ENCODE measurements at regions of chr3 and their contacts with region 1.

Region 1: GRCh38 chr3:107676469-107677309 is 153.9 kb downstream of the BBX start:
- DNase-seq: peak in 4 of 9 donors; percentile 10 to 52 (median 44)
- ATAC-seq: peak; percentile 49
- H3K4me3 ChIP-seq: no peak overlapping the region
- H3K4me3 Mint-ChIP-seq: no peak overlapping the region
- H3K27ac ChIP-seq: no peak overlapping the region
- H3K27ac Mint-ChIP-seq: peak overlapping the region in 4 of 9 donors; percentile 19 to 79 (median 53)
- H3K4me1 ChIP-seq: no peaks in the 10 kb centered on the region
- H3K4me1 Mint-ChIP-seq: peaks cover 21 to 56% (median 48%) of the 10 kb centered on the region in 7 donors
- H3K27me3 ChIP-seq: no peaks in the 10 kb centered on the region
- H3K27me3 Mint-ChIP-seq: peaks cover 0 to 2% (median 0%) of the 10 kb centered on the region in 5 donors

Region 2: DNA sequence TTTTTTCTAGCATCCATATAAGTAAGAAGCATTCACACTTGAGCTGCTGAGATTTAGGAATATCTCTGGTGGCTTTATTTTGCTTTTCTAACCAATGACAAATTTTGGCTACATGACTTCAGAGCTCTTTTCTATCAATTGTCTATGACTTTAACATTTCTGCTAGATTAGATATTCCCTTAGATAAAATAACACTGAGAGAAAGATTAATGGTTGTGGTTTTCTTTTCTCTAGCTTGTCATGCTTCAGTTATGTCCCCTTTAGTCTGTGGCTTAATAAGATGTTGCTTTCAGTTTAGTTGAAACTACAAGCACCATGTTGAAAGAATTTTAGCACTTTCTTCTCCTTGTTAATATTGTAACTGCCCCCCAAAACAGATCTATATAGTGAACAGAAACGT is 965.0 kb before region 1 on chr3:
- CTCF ChIA-PET with region 1: no interaction called
- POLR2A ChIA-PET with region 1: no interaction called
- intact Hi-C with region 1: no loop called
- DNase-seq: no peak
- ATAC-seq: no peak
- H3K4me3 ChIP-seq: no peak overlapping the region
- H3K4me3 Mint-ChIP-seq: no peak overlapping the region
- H3K27ac ChIP-seq: no peak overlapping the region
- H3K27ac Mint-ChIP-seq: no peak overlapping the region
- H3K4me1 ChIP-seq: no peaks in the 10 kb centered on the region
- H3K4me1 Mint-ChIP-seq: no peaks in the 10 kb centered on the region
- H3K27me3 ChIP-seq: no peaks in the 10 kb centered on the region
- H3K27me3 Mint-ChIP-seq: peaks cover 0 to 13% (median 4%) of the 10 kb centered on the region in 5 donors

Region 3: GRCh38 chr3:107690522-107691138 is 13.9 kb after region 1 on chr3:
- CTCF ChIA-PET with region 1: interaction called, 39 read pairs
- POLR2A ChIA-PET with region 1: interaction called, 3 read pairs
- intact Hi-C with region 1: loop called in 1 of 2 experiments (anchors 2 kb)
- DNase-seq: peak in 7 of 9 donors; percentile 4 to 36 (median 32)
- ATAC-seq: peak; percentile 77
- H3K4me3 ChIP-seq: no peak overlapping the region
- H3K4me3 Mint-ChIP-seq: no peak overlapping the region
- H3K27ac ChIP-seq: no peak overlapping the region
- H3K27ac Mint-ChIP-seq: no peak overlapping the region
- H3K4me1 ChIP-seq: peaks cover 0 to 1% of the 10 kb centered on the region in 2 donors
- H3K4me1 Mint-ChIP-seq: peaks cover 2 to 42% (median 25%) of the 10 kb centered on the region in 7 donors
- H3K27me3 ChIP-seq: no peaks in the 10 kb centered on the region
- H3K27me3 Mint-ChIP-seq: no peaks in the 10 kb centered on the region

Region 4: DNA sequence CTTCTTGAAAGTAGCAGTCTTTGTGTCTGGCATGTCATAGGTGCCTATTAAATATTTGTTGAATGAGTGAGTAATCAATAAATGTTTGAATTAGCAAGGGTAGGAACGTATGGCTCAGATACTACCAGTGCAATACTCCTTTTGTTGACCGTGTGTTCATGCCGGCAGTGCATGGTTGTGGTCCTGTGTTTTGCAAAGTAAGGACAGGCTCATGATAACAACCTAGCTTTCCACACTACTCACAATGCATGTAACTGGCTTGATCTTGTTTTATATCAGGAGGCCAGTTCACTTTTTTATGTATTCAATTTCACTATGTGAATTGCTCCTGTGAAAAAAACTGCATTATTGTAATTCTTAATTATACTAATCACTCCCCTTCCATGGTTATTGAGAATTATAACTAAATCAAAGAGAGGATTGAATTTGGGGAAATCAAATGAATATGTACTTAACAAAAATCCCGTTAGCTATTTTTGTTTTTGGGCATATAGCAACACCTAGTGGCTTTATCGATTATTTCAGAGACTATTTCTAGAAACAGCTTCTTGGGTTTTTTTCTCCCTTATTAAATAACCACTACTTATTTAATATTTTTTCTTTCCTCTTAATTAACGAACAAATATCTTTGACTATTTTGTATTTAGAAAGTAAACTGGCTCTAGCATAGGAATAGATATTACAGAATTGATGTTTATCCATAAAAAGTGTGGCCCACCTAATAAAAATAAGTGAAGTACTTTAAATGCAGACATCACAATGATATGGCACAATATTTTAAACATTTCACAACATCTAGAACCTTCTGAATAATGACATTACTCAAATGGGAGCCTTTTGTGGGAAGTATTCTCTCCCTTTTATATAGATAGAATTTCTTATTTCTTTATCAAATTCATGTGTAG is 64.6 kb after region 1 on chr3:
- CTCF ChIA-PET with region 1: interaction called, 59 read pairs
- POLR2A ChIA-PET with region 1: interaction called, 4 read pairs
- intact Hi-C with region 1: loop called (anchors 1 kb)
- DNase-seq: peak in 6 of 9 donors; percentile 3 to 42 (median 22)
- ATAC-seq: no peak
- H3K4me3 ChIP-seq: no peak overlapping the region
- H3K4me3 Mint-ChIP-seq: no peak overlapping the region
- H3K27ac ChIP-seq: no peak overlapping the region
- H3K27ac Mint-ChIP-seq: no peak overlapping the region
- H3K4me1 ChIP-seq: no peaks in the 10 kb centered on the region
- H3K4me1 Mint-ChIP-seq: peaks cover 0 to 12% (median 0%) of the 10 kb centered on the region in 7 donors
- H3K27me3 ChIP-seq: no peaks in the 10 kb centered on the region
- H3K27me3 Mint-ChIP-seq: no peaks in the 10 kb centered on the region

Region 5: GRCh38 chr3:107846279-107846852 is 169.7 kb after region 1 on chr3:
- CTCF ChIA-PET with region 1: no interaction called
- POLR2A ChIA-PET with region 1: no interaction called
- intact Hi-C with region 1: loop called (anchors 1 to 5 kb)
- DNase-seq: peak in 5 of 9 donors; percentile 2 to 20 (median 6)
- ATAC-seq: no peak
- H3K4me3 ChIP-seq: no peak overlapping the region
- H3K4me3 Mint-ChIP-seq: no peak overlapping the region
- H3K27ac ChIP-seq: no peak overlapping the region
- H3K27ac Mint-ChIP-seq: no peak overlapping the region
- H3K4me1 ChIP-seq: no peaks in the 10 kb centered on the region
- H3K4me1 Mint-ChIP-seq: no peaks in the 10 kb centered on the region
- H3K27me3 ChIP-seq: no peaks in the 10 kb centered on the region
- H3K27me3 Mint-ChIP-seq: peaks cover 0 to 13% (median 0%) of the 10 kb centered on the region in 5 donors

Region 6: GRCh38 chr3:108322352-108322751 is 645.7 kb after region 1 on chr3:
- CTCF ChIA-PET with region 1: no interaction called
- POLR2A ChIA-PET with region 1: no interaction called
- intact Hi-C with region 1: loop called in 1 of 2 experiments (anchors 1 kb)
- DNase-seq: peak in 5 of 9 donors; percentile 16 to 40 (median 36)
- ATAC-seq: no peak
- H3K4me3 ChIP-seq: no peak overlapping the region
- H3K4me3 Mint-ChIP-seq: no peak overlapping the region
- H3K27ac ChIP-seq: no peak overlapping the region
- H3K27ac Mint-ChIP-seq: no peak overlapping the region
- H3K4me1 ChIP-seq: no peaks in the 10 kb centered on the region
- H3K4me1 Mint-ChIP-seq: peaks cover 0 to 21% (median 5%) of the 10 kb centered on the region in 7 donors
- H3K27me3 ChIP-seq: no peaks in the 10 kb centered on the region
- H3K27me3 Mint-ChIP-seq: no peaks in the 10 kb centered on the region

Region 7: DNA sequence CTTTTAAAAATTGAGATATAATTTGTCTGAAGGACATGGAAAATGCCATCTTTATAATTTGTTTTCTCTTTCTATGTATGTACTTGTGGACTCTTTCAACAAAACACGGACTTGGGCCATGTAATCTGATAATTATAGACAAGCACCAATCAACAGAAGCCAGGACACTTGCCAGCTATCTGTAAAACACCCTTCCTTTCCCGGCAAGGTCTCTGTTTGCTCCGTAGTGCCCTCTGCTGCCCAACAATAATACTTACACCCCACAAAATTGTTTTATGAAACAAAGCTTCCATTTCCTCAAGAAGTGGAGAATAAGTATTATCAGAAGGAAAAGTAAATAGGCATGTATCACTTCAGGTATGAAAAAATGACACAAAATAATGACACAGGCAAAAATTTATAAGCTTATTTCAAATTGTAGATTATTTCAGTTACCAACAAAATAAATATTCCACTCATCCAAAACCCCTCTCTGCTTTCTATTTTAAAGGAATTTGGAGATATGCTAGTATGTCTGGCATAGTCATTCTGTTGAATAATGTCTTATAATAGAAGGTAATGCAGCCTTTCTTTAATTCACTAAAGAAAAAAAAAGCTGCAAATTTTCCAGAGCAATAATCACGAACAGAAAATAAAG is 800.9 kb after region 1 on chr3:
- CTCF ChIA-PET with region 1: no interaction called
- POLR2A ChIA-PET with region 1: no interaction called
- intact Hi-C with region 1: loop called (anchors 1 to 5 kb)
- DNase-seq: peak; percentile 17 to 65 (median 51)
- ATAC-seq: peak; percentile 91
- H3K4me3 ChIP-seq: no peak overlapping the region
- H3K4me3 Mint-ChIP-seq: no peak overlapping the region
- H3K27ac ChIP-seq: no peak overlapping the region
- H3K27ac Mint-ChIP-seq: no peak overlapping the region
- H3K4me1 ChIP-seq: no peaks in the 10 kb centered on the region
- H3K4me1 Mint-ChIP-seq: peaks cover 0 to 7% (median 0%) of the 10 kb centered on the region in 7 donors
- H3K27me3 ChIP-seq: no peaks in the 10 kb centered on the region
- H3K27me3 Mint-ChIP-seq: peaks cover 0 to 17% (median 3%) of the 10 kb centered on the region in 5 donors

Measured in naive thymus-derived CD4-positive, alpha-beta T cell (primary cell).